B cell (primary cell): ENCODE measurements at regions of chr22 and their contacts with region 1.

Region 1: DNA sequence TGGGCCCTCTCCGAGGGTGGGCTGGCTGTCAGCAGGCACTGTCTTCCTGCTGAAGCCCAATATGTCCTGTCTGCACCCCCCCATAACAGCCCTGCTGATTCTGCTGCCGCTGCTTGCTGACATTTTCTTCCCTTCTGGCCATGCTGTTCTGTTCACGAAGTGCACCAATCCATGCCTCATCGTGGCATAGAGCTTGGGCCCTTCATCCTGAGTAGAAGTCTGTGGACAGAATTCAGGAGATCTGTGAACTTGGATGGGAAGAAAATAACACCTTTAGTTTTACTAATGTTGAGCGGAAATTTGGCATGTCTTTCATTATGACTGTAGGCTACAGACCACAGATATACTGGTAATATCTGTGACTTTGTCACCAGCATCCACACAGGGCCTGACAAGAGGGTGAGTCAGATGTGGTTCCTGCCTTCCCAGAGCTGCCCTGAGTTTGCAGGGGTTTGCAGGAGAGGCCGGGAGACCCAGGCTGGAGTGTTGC is 14.1 kb upstream of the KIAA0930 start:
- DNase-seq: no peak
- ATAC-seq: no peak
- H3K4me3 ChIP-seq: no peak overlapping the region
- H3K4me3 Mint-ChIP-seq: no peak overlapping the region
- H3K27ac ChIP-seq: no peak overlapping the region
- H3K27ac Mint-ChIP-seq: no peak overlapping the region
- H3K4me1 ChIP-seq: peaks cover 0 to 12% of the 10 kb centered on the region in 2 donors
- H3K4me1 Mint-ChIP-seq: peaks cover 14% of the 10 kb centered on the region
- H3K27me3 ChIP-seq: no peaks in the 10 kb centered on the region
- H3K27me3 Mint-ChIP-seq: no peaks in the 10 kb centered on the region
- CTCF ChIP-seq: no peak

Region 2: GRCh38 chr22:45163451-45164269 is 91.2 kb before region 1 on chr22 and contains the start of gene NUP50:
- CTCF ChIA-PET with region 1: no interaction called
- POLR2A ChIA-PET with region 1: no interaction called
- intact Hi-C with region 1: no loop called
- DNase-seq: peak; percentile 99
- ATAC-seq: peak; percentile 79
- H3K4me3 ChIP-seq: peak within 1 kb of the TSS; percentile 76 to 89 (median 82)
- H3K4me3 Mint-ChIP-seq: peak within 1 kb of the TSS; percentile 92
- H3K27ac ChIP-seq: peak within 1 kb of the TSS; percentile 81 to 94
- H3K27ac Mint-ChIP-seq: peak within 1 kb of the TSS; percentile 94
- H3K4me1 ChIP-seq: peaks cover 19 to 23% of the 10 kb centered on the region in 2 donors
- H3K4me1 Mint-ChIP-seq: peaks cover 47% of the 10 kb centered on the region
- H3K27me3 ChIP-seq: no peaks in the 10 kb centered on the region
- H3K27me3 Mint-ChIP-seq: no peaks in the 10 kb centered on the region
- CTCF ChIP-seq: no peak
- total RNA-seq, gene NUP50: 105 and 108 TPM in 2 replicates

Region 3: GRCh38 chr22:45577746-45578523 is 323.1 kb after region 1 on chr22:
- CTCF ChIA-PET with region 1: no interaction called
- POLR2A ChIA-PET with region 1: no interaction called
- intact Hi-C with region 1: loop called (anchors 5 kb)
- DNase-seq: peak; percentile 76
- ATAC-seq: peak; percentile 66
- H3K4me3 ChIP-seq: no peak overlapping the region
- H3K4me3 Mint-ChIP-seq: no peak overlapping the region
- H3K27ac ChIP-seq: no peak overlapping the region
- H3K27ac Mint-ChIP-seq: no peak overlapping the region
- H3K4me1 ChIP-seq: peaks cover 6% of the 10 kb centered on the region in 2 donors
- H3K4me1 Mint-ChIP-seq: peaks cover 4% of the 10 kb centered on the region
- H3K27me3 ChIP-seq: peaks cover 0 to 29% (median 7%) of the 10 kb centered on the region in 4 experiments
- H3K27me3 Mint-ChIP-seq: peaks cover 20% of the 10 kb centered on the region
- CTCF ChIP-seq: peak; percentile 95